ENCODE measurements at regions of chr19 and their contacts with region 1.

Region 1: DNA sequence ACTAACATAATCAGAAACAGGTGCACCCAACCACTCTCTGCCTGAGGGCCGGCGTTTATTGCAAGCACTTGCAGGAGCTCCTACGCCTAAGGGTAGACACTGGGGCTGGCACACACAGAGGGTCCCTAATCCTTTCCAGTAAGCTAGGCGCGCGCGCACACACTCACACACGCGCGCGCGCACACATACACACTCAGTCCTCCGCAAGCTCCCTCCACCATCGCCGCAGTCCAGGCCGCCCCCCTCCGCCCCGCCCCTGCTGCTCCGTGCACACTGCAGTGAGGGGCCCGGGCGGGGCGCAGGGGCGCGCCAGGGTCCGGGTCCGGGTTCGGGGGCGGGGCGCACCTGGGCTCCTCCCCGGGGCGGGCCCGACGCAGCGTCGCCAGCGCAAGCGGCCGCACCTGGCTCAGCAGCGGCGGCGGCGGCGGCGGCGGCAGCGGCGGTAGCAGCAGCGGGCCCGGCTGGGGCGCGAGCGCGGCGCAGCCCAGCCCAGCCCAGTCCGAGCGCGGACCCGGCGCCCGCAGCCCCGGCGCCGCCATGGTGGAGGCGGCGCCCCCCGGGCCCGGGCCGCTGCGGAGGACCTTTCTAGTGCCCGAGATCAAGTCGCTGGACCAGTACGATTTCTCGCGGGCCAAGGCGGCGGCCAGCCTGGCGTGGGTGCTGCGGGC is at the start of gene CAMSAP3:
- DNase-seq: peak; percentile 38
- H3K4me3 ChIP-seq: peak within 1 kb of the TSS; percentile 61 to 64 (median 62)
- H3K27ac ChIP-seq: no peak within 1 kb of the TSS
- H3K4me1 ChIP-seq: peaks cover 6% of the 10 kb centered on the region
- H3K27me3 ChIP-seq: no peaks in the 10 kb centered on the region
- CTCF ChIP-seq: no peak
- total RNA-seq, gene CAMSAP3: 3.8 to 10.0 TPM

Region 2: GRCh38 chr19:7618771-7619514 is 23.3 kb after region 1 on chr19:
- CTCF ChIA-PET with region 1: interaction called, 17 read pairs
- dilution Hi-C with region 1: no loop called
- in situ Hi-C with region 1: no loop called
- intact Hi-C with region 1: no loop called
- DNase-seq: no peak
- H3K4me3 ChIP-seq: no peak overlapping the region
- H3K27ac ChIP-seq: no peak overlapping the region
- H3K4me1 ChIP-seq: no peaks in the 10 kb centered on the region
- H3K27me3 ChIP-seq: no peaks in the 10 kb centered on the region
- CTCF ChIP-seq: no peak